GM12878 (cell line): ENCODE measurements at regions of chr6 and their contacts with region 1.

Region 1: GRCh38 chr6:151690768-151691562 is 116.5 kb upstream of the ESR1 start:
- DNase-seq: peak; percentile 83
- ATAC-seq: peak; percentile 97
- H3K4me3 ChIP-seq: peak overlapping the region; percentile 31; the same call in 1 of the 2 replicates
- H3K27ac ChIP-seq: no peak overlapping the region; the same call in 1 of the 2 replicates
- H3K4me1 ChIP-seq: peaks cover 17% of the 10 kb centered on the region
- H3K27me3 ChIP-seq: no peaks in the 10 kb centered on the region
- CTCF ChIP-seq: no peak
- EP300 ChIP-seq: peak; percentile 94 to 98
- POLR2A ChIP-seq: no peak
- RAD21 ChIP-seq: no peak

Region 2: DNA sequence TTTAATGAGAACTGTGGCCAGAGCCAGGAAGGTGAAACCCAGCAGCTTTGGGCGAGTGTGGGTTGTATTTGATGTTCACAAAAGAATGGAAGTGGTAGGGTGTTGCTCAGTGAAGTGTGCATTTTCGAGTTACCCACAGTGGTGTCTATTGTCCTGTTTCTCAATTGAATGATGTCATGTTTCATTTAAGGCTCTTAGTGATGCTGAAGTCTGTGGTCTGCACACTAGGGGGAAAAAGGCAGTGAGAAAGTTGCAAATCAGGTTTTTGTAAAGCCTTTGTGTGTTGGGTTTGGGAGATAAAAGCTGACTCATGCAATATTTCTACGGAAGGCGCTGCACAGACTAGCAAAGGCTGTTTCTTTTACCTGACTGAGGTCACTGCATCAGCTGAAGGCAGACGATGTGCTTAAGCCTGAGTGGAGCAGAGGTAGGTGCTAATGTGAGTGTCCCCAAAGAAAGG is 970.2 kb before region 1 on chr6:
- CTCF ChIA-PET with region 1: no interaction called
- POLR2A ChIA-PET with region 1: no interaction called
- RAD21 ChIA-PET with region 1: no interaction called
- SMC1A ChIA-PET with region 1: no interaction called
- in situ Hi-C with region 1: no loop called
- intact Hi-C with region 1: no loop called
- DNase-seq: peak; percentile 94
- ATAC-seq: peak; percentile 96
- H3K4me3 ChIP-seq: 0 out of 2 replicates have a peak overlapping the region, but pooled peaks have one; percentile 7
- H3K27ac ChIP-seq: peak overlapping the region; percentile 32
- H3K4me1 ChIP-seq: peaks cover 19% of the 10 kb centered on the region
- H3K27me3 ChIP-seq: no peaks in the 10 kb centered on the region
- CTCF ChIP-seq: peak in 1 of 3 experiments; percentile 16; a peak in 1 of 6 replicates
- EP300 ChIP-seq: peak; percentile 77 to 98
- POLR2A ChIP-seq: no peak
- RAD21 ChIP-seq: peak; percentile 40

Region 3: GRCh38 chr6:151254451-151255081 is 436.4 kb before region 1 on chr6:
- CTCF ChIA-PET with region 1: no interaction called
- POLR2A ChIA-PET with region 1: no interaction called
- RAD21 ChIA-PET with region 1: no interaction called
- SMC1A ChIA-PET with region 1: no interaction called
- in situ Hi-C with region 1: no loop called
- intact Hi-C with region 1: no loop called
- DNase-seq: no peak
- ATAC-seq: no peak
- H3K4me3 ChIP-seq: no peak overlapping the region
- H3K27ac ChIP-seq: no peak overlapping the region
- H3K4me1 ChIP-seq: no peaks in the 10 kb centered on the region
- H3K27me3 ChIP-seq: no peaks in the 10 kb centered on the region
- CTCF ChIP-seq: no peak
- EP300 ChIP-seq: no peak
- POLR2A ChIP-seq: no peak
- RAD21 ChIP-seq: no peak

Region 4: DNA sequence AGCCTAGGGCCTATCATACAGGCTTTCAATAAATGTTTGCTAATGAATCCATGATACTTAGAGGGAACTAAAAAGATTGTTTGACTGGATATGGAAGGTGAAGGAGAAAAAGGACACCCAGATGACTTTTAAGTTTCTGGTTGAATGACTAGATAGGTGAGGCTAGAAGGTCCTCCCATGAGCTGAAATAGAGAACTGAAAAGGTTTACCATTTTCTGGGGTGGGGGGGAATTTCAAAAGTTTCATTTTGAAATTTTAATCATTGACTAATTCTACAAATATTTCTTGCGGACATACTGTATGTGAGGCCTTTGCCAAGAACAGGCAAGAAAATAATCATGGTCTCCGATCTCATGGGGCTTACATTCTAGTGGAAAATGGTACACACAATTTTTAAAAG is 281.7 kb before region 1 on chr6:
- CTCF ChIA-PET with region 1: no interaction called
- POLR2A ChIA-PET with region 1: no interaction called
- RAD21 ChIA-PET with region 1: no interaction called
- SMC1A ChIA-PET with region 1: no interaction called
- in situ Hi-C with region 1: no loop called
- intact Hi-C with region 1: no loop called
- DNase-seq: no peak
- ATAC-seq: peak; percentile 82
- H3K4me3 ChIP-seq: no peak overlapping the region
- H3K27ac ChIP-seq: no peak overlapping the region; the same call in 1 of the 2 replicates
- H3K4me1 ChIP-seq: peaks cover 6% of the 10 kb centered on the region
- H3K27me3 ChIP-seq: no peaks in the 10 kb centered on the region
- CTCF ChIP-seq: no peak
- EP300 ChIP-seq: no peak
- POLR2A ChIP-seq: no peak
- RAD21 ChIP-seq: no peak

Region 5: DNA sequence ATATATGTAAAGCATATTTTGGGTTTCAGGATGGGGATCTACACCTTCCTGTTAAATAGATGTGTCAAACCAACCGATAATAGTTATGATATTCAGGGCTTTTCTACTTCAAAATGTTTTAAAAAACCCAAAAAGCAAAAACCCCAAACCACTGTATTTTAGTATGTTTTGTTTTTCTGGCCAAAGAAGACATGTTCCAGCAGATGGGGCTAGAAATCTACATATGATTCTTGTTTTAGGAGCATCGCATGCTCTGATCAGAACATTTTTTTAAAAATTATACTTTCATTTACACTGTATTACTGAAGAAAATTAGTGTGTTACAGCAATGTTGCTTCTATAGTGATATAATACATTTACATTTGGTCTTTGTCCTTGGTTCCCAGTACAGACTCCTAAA is 250.0 kb before region 1 on chr6:
- CTCF ChIA-PET with region 1: interaction called, 14 read pairs
- POLR2A ChIA-PET with region 1: no interaction called
- RAD21 ChIA-PET with region 1: interaction called, 6 read pairs
- SMC1A ChIA-PET with region 1: interaction called, 8 read pairs
- in situ Hi-C with region 1: no loop called
- intact Hi-C with region 1: loop called (anchors 5 kb)
- DNase-seq: no peak
- ATAC-seq: peak; percentile 65
- H3K4me3 ChIP-seq: peak overlapping the region; percentile 32; the same call in 1 of the 2 replicates
- H3K27ac ChIP-seq: peak overlapping the region; percentile 61
- H3K4me1 ChIP-seq: peaks cover 13% of the 10 kb centered on the region
- H3K27me3 ChIP-seq: no peaks in the 10 kb centered on the region
- CTCF ChIP-seq: peak; percentile 24 to 50 (median 49); a peak in 5 of 6 replicates
- EP300 ChIP-seq: no peak
- POLR2A ChIP-seq: no peak
- RAD21 ChIP-seq: peak; percentile 67

Region 6: GRCh38 chr6:151723152-151723551 is 32.2 kb after region 1 on chr6:
- CTCF ChIA-PET with region 1: interaction called, 4 read pairs
- POLR2A ChIA-PET with region 1: interaction called, 3 read pairs
- RAD21 ChIA-PET with region 1: interaction called, 15 read pairs
- SMC1A ChIA-PET with region 1: interaction called, 24 read pairs
- in situ Hi-C with region 1: no loop called
- intact Hi-C with region 1: loop called (anchors 1 kb)
- DNase-seq: no peak
- ATAC-seq: peak; percentile 90
- H3K4me3 ChIP-seq: no peak overlapping the region
- H3K27ac ChIP-seq: no peak overlapping the region
- H3K4me1 ChIP-seq: peaks cover 7% of the 10 kb centered on the region
- H3K27me3 ChIP-seq: no peaks in the 10 kb centered on the region
- CTCF ChIP-seq: no peak
- EP300 ChIP-seq: no peak
- POLR2A ChIP-seq: no peak
- RAD21 ChIP-seq: no peak

Region 7: DNA sequence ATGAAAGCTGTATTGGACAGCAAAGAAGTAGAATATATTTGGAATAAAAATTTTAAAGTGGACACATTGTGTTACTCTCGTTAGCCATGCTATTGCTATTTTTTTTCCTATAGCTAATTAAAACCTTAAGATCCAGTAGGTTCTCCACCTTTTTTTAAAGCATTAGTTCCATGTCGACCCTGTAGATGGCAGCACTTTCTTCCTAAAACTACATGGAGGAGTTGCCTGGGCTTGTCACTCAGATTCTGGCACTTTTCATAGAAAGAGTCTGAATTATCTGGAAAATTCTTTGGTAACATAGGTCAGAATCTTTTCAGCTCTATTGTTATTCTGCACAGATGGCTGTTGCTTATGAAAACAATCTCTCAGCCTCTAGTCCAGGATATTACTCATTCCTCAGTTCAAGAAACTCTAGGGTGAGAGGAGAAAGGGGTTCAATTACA is 74.5 kb after region 1 on chr6:
- CTCF ChIA-PET with region 1: interaction called, 85 read pairs
- POLR2A ChIA-PET with region 1: interaction called, 8 read pairs
- RAD21 ChIA-PET with region 1: interaction called, 59 read pairs
- SMC1A ChIA-PET with region 1: interaction called, 90 read pairs
- in situ Hi-C with region 1: no loop called
- intact Hi-C with region 1: loop called (anchors 2 kb)
- DNase-seq: no peak
- ATAC-seq: peak; percentile 80
- H3K4me3 ChIP-seq: no peak overlapping the region
- H3K27ac ChIP-seq: no peak overlapping the region
- H3K4me1 ChIP-seq: no peaks in the 10 kb centered on the region
- H3K27me3 ChIP-seq: peaks cover 0 to 5% of the 10 kb centered on the region in 2 experiments; a peak in 1 of 4 replicates
- CTCF ChIP-seq: peak; percentile 60 to 76 (median 64)
- EP300 ChIP-seq: no peak
- POLR2A ChIP-seq: no peak
- RAD21 ChIP-seq: peak; percentile 71

Region 8: GRCh38 chr6:152124429-152125074 is 433.6 kb after region 1 on chr6:
- CTCF ChIA-PET with region 1: interaction called, 157 read pairs
- POLR2A ChIA-PET with region 1: no interaction called
- RAD21 ChIA-PET with region 1: interaction called, 87 read pairs
- SMC1A ChIA-PET with region 1: interaction called, 131 read pairs
- in situ Hi-C with region 1: loop called (anchors 5 kb)
- intact Hi-C with region 1: loop called (anchors 1 kb)
- DNase-seq: no peak
- ATAC-seq: peak; percentile 82
- H3K4me3 ChIP-seq: no peak overlapping the region
- H3K27ac ChIP-seq: no peak overlapping the region
- H3K4me1 ChIP-seq: no peaks in the 10 kb centered on the region
- H3K27me3 ChIP-seq: no peaks in the 10 kb centered on the region
- CTCF ChIP-seq: peak; percentile 57 to 63 (median 58); a peak in 5 of 6 replicates
- EP300 ChIP-seq: no peak
- POLR2A ChIP-seq: no peak
- RAD21 ChIP-seq: peak; percentile 72

Region 9: GRCh38 chr6:152295346-152295745 is 604.4 kb after region 1 on chr6:
- CTCF ChIA-PET with region 1: interaction called, 24 read pairs
- POLR2A ChIA-PET with region 1: no interaction called
- RAD21 ChIA-PET with region 1: interaction called, 16 read pairs
- SMC1A ChIA-PET with region 1: interaction called, 16 read pairs
- in situ Hi-C with region 1: no loop called
- intact Hi-C with region 1: no loop called
- DNase-seq: no peak
- ATAC-seq: no peak
- H3K4me3 ChIP-seq: no peak overlapping the region
- H3K27ac ChIP-seq: no peak overlapping the region
- H3K4me1 ChIP-seq: peaks cover 6% of the 10 kb centered on the region
- H3K27me3 ChIP-seq: no peaks in the 10 kb centered on the region
- CTCF ChIP-seq: no peak
- EP300 ChIP-seq: no peak
- POLR2A ChIP-seq: no peak
- RAD21 ChIP-seq: no peak

Region 10: DNA sequence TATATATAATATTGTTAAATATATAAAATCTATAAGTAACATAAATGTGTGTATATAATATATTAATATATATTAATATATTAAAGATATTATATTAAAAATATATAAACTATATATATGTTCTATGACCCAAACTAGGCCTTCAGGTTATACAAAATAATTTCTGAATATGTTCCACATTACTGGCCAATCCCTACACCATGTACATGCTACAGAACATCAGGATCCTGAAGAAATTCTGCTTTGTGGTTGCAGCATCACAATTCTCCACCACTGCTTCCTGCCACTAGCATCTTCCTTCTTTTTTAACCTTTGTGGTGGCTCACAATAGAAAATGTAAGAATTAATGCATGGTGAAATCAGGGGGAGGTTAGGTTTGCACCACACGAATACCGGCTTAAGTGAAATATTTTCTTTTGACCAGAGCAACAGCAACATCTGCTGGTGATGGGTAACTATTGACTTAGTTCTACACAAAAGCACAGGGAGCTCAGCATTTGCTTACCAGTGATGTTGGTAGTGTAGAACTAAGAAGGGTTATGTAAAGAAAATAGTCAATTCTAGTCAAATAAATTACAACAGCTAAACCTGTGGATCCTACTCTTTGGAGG is 665.6 kb after region 1 on chr6:
- CTCF ChIA-PET with region 1: interaction called, 15 read pairs
- POLR2A ChIA-PET with region 1: no interaction called
- RAD21 ChIA-PET with region 1: interaction called, 13 read pairs
- SMC1A ChIA-PET with region 1: interaction called, 3 read pairs
- in situ Hi-C with region 1: no loop called
- intact Hi-C with region 1: no loop called
- DNase-seq: no peak
- ATAC-seq: peak; percentile 78
- H3K4me3 ChIP-seq: no peak overlapping the region
- H3K27ac ChIP-seq: no peak overlapping the region
- H3K4me1 ChIP-seq: no peaks in the 10 kb centered on the region
- H3K27me3 ChIP-seq: no peaks in the 10 kb centered on the region
- CTCF ChIP-seq: peak; percentile 28 to 53 (median 47); a peak in 4 of 6 replicates
- EP300 ChIP-seq: no peak
- POLR2A ChIP-seq: no peak
- RAD21 ChIP-seq: peak; percentile 67